ENCODE measurements at regions of chr15 and their contacts with region 1.

Region 1: GRCh38 chr15:25811481-25811906 is 51.6 kb downstream of the ATP10A start:
- DNase-seq: peak in 5 of 9 donors; percentile 20 to 47 (median 27)
- ATAC-seq: peak; percentile 50
- H3K4me3 ChIP-seq: peak overlapping the region; percentile 37
- H3K4me3 Mint-ChIP-seq: peak overlapping the region; percentile 74 to 95 (median 84)
- H3K27ac ChIP-seq: peak overlapping the region; percentile 64
- H3K27ac Mint-ChIP-seq: peak overlapping the region; percentile 80 to 98 (median 94)
- H3K4me1 ChIP-seq: peaks cover 20 to 51% of the 10 kb centered on the region in 2 donors
- H3K4me1 Mint-ChIP-seq: peaks cover 45 to 98% (median 81%) of the 10 kb centered on the region in 7 donors
- H3K27me3 ChIP-seq: no peaks in the 10 kb centered on the region
- H3K27me3 Mint-ChIP-seq: no peaks in the 10 kb centered on the region

Region 2: DNA sequence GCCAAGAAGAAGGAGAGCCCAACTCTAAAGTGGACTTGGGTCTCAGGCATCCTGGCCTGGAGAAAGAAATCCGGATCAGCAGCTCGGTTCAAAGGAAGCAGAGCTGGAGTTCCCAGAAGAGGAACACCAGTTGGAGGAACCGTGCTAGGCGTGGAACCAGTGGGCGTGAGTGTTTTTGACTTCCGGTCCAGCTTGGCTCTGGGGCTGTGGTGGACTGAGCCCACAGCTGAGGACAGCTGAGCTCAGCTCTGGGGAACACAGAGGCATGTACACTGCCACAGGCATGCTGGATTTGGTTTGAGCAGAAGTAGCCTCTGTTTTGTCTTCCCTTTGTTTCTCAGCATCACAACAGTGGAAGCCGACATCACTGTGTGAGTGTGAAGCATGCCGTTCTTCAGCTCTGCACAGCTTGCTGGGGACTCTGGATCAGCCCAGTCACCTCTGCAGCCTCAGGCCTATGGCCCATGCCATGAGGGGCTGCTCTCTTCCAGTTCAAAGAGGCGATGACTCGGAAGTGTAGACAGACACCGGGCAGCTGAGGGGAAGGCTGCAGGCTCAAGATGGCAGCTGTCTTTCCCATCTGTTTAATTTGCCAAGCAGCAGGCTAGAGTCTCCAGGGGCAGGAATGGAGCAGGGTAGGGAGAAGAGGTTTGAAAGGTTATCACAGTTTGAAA is 186.9 kb before region 1 on chr15:
- CTCF ChIA-PET with region 1: no interaction called
- POLR2A ChIA-PET with region 1: no interaction called
- intact Hi-C with region 1: no loop called
- DNase-seq: no peak
- ATAC-seq: no peak
- H3K4me3 ChIP-seq: no peak overlapping the region
- H3K4me3 Mint-ChIP-seq: no peak overlapping the region
- H3K27ac ChIP-seq: no peak overlapping the region
- H3K27ac Mint-ChIP-seq: no peak overlapping the region
- H3K4me1 ChIP-seq: no peaks in the 10 kb centered on the region
- H3K4me1 Mint-ChIP-seq: no peaks in the 10 kb centered on the region
- H3K27me3 ChIP-seq: no peaks in the 10 kb centered on the region
- H3K27me3 Mint-ChIP-seq: peaks cover 4 to 22% (median 9%) of the 10 kb centered on the region in 5 donors

Region 3: DNA sequence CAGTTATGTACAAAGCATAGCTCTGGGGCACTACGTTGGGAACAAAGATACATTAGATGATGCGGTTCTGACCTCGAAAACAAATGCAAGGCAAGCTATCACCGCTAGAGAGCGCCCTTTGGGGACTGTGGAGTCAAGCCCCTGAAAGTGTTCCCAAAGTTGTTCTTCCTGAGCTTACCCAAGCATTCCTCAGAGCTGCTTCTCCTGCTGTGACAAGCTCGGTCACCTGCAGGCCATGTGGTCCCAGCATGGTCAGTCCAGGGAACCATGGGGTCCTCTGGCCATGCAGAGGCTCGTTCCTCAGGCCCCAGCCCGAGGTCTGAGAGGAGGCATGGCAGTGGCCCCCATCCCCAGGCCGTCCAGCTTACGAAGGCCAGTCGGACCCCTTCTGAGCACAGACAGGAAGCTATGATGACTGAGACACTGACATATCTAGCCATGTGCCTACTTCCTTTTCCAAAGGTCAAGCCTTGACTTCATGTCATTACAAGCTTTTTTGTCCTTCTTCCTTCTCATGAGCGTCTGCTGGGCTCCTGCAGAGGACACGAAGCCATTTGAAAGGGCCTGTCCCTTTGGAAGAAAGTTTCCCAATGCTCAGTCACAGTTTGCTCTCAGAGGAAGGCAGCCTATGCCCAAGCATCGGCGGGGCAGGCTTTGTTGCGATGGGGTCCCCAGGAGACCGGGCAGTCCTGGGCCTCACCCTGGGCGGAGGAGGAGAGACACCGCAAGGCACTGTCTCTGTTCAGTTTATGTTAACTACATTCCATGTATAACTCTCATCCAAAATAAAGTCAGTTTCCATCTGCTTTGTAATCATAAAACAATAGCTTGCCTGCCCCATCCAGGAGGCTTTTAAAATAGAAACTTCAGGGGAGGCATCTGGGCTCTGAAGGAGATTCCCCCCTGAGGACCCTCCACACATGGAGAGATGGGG is 27.6 kb before region 1 on chr15:
- CTCF ChIA-PET with region 1: interaction called, 4 read pairs
- POLR2A ChIA-PET with region 1: interaction called, 3 read pairs
- intact Hi-C with region 1: loop called in 1 of 2 experiments (anchors 1 kb)
- DNase-seq: peak in 6 of 9 donors; percentile 22 to 50 (median 40)
- ATAC-seq: peak; percentile 52
- H3K4me3 ChIP-seq: no peak overlapping the region
- H3K4me3 Mint-ChIP-seq: peak overlapping the region in 1 of 10 donors; percentile 16
- H3K27ac ChIP-seq: no peak overlapping the region
- H3K27ac Mint-ChIP-seq: peak overlapping the region; percentile 1 to 88 (median 62)
- H3K4me1 ChIP-seq: peaks cover 0 to 5% of the 10 kb centered on the region in 2 donors
- H3K4me1 Mint-ChIP-seq: peaks cover 37 to 62% (median 45%) of the 10 kb centered on the region in 7 donors
- H3K27me3 ChIP-seq: no peaks in the 10 kb centered on the region
- H3K27me3 Mint-ChIP-seq: no peaks in the 10 kb centered on the region

Region 4: DNA sequence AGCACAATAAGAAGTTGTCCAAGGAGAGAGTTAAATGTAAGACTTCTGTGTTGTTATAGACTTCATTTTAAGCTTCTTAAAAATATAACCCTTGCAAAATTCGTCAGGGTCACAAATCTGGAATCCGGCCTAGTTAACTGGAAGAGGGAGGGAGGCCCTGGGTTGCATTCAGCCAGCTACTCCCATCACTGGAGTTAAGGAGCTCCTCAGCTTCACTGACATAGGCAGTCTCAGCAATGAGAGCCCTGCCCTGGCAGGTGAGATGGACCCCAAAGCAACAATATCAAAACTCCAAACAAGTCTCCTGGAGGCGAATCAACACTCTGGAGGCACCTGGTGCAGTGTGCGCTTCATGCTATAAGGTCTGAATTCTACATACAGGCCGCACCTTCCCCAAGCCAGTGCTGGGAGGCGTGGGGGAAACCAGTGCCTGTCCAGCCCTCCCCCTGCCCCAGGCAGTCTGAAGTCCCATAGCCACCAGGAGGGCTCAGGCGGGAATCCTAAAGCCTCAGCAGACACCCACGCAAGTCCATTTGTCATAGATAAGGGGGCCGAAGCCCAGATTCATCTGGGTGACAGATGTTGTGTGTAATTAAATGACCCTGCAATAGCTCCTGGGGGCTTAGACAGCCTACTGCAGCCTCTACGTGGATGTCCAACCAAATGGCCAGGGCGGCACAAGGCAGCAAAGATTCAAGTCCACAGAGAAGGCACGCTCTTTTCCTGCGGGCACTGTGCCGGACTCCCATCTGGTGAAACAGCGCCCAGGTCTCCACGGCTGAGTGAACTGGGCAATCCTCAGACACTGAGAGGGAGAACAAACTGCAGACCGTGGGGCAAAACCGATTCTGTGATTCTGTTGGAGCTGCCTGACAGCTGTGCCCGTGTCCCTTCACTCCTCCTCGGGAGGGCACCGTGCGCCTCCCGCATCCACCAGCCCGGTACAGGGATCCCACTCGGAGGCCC is 13.3 kb before region 1 on chr15:
- CTCF ChIA-PET with region 1: no interaction called
- POLR2A ChIA-PET with region 1: interaction called, 11 read pairs
- intact Hi-C with region 1: loop called in 1 of 2 experiments (anchors 2 kb)
- DNase-seq: no peak
- ATAC-seq: no peak
- H3K4me3 ChIP-seq: no peak overlapping the region
- H3K4me3 Mint-ChIP-seq: peak overlapping the region in 5 of 10 donors; percentile 21 to 89 (median 80)
- H3K27ac ChIP-seq: no peak overlapping the region
- H3K27ac Mint-ChIP-seq: peak overlapping the region in 8 of 9 donors; percentile 8 to 87 (median 65)
- H3K4me1 ChIP-seq: peaks cover 0 to 31% of the 10 kb centered on the region in 2 donors
- H3K4me1 Mint-ChIP-seq: peaks cover 57 to 96% (median 84%) of the 10 kb centered on the region in 7 donors
- H3K27me3 ChIP-seq: no peaks in the 10 kb centered on the region
- H3K27me3 Mint-ChIP-seq: no peaks in the 10 kb centered on the region

Region 5: DNA sequence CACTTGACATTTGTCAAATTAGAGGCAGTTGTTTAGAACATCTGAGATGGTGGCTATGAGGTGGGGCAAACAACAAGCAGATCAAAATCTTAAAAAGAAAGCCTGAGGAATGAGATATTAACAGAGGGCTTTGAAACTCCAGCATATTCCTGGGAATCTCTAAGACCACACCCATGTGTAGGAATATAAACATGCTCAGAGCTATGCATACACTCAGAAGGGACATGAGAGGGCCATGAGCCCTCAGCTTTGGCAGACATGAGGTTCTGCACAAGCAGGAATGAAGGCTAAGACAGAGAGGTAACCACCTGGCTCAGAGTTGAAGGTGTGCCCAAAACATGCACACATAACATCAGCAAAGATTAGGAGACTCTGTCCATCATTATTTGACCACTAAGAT is 13.7 kb after region 1 on chr15:
- CTCF ChIA-PET with region 1: no interaction called
- POLR2A ChIA-PET with region 1: interaction called, 6 read pairs
- intact Hi-C with region 1: loop called in 1 of 2 experiments (anchors 1 kb)
- DNase-seq: no peak
- ATAC-seq: no peak
- H3K4me3 ChIP-seq: no peak overlapping the region
- H3K4me3 Mint-ChIP-seq: peak overlapping the region in 2 of 10 donors; percentile 25 to 43
- H3K27ac ChIP-seq: no peak overlapping the region
- H3K27ac Mint-ChIP-seq: peak overlapping the region in 4 of 9 donors; percentile 16 to 72 (median 50)
- H3K4me1 ChIP-seq: peaks cover 0 to 19% of the 10 kb centered on the region in 2 donors
- H3K4me1 Mint-ChIP-seq: peaks cover 27 to 88% (median 83%) of the 10 kb centered on the region in 7 donors
- H3K27me3 ChIP-seq: no peaks in the 10 kb centered on the region
- H3K27me3 Mint-ChIP-seq: no peaks in the 10 kb centered on the region

Region 6: GRCh38 chr15:25830844-25831451 is 19.5 kb after region 1 on chr15:
- CTCF ChIA-PET with region 1: no interaction called
- POLR2A ChIA-PET with region 1: interaction called, 6 read pairs
- intact Hi-C with region 1: loop called in 1 of 2 experiments (anchors 2 kb)
- DNase-seq: no peak
- ATAC-seq: no peak
- H3K4me3 ChIP-seq: no peak overlapping the region
- H3K4me3 Mint-ChIP-seq: no peak overlapping the region
- H3K27ac ChIP-seq: no peak overlapping the region
- H3K27ac Mint-ChIP-seq: peak overlapping the region in 4 of 9 donors; percentile 38 to 67 (median 64)
- H3K4me1 ChIP-seq: peaks cover 0 to 8% of the 10 kb centered on the region in 2 donors
- H3K4me1 Mint-ChIP-seq: peaks cover 18 to 76% (median 61%) of the 10 kb centered on the region in 7 donors
- H3K27me3 ChIP-seq: no peaks in the 10 kb centered on the region
- H3K27me3 Mint-ChIP-seq: no peaks in the 10 kb centered on the region

Region 7: GRCh38 chr15:25838191-25838870 is 26.8 kb after region 1 on chr15:
- CTCF ChIA-PET with region 1: no interaction called
- POLR2A ChIA-PET with region 1: no interaction called
- intact Hi-C with region 1: loop called in 1 of 2 experiments (anchors 2 kb)
- DNase-seq: no peak
- ATAC-seq: no peak
- H3K4me3 ChIP-seq: no peak overlapping the region
- H3K4me3 Mint-ChIP-seq: peak overlapping the region in 8 of 10 donors; percentile 8 to 75 (median 40)
- H3K27ac ChIP-seq: no peak overlapping the region
- H3K27ac Mint-ChIP-seq: peak overlapping the region in 4 of 9 donors; percentile 48 to 74 (median 62)
- H3K4me1 ChIP-seq: peaks cover 0 to 14% of the 10 kb centered on the region in 2 donors
- H3K4me1 Mint-ChIP-seq: peaks cover 30 to 90% (median 75%) of the 10 kb centered on the region in 7 donors
- H3K27me3 ChIP-seq: no peaks in the 10 kb centered on the region
- H3K27me3 Mint-ChIP-seq: no peaks in the 10 kb centered on the region

Region 8: DNA sequence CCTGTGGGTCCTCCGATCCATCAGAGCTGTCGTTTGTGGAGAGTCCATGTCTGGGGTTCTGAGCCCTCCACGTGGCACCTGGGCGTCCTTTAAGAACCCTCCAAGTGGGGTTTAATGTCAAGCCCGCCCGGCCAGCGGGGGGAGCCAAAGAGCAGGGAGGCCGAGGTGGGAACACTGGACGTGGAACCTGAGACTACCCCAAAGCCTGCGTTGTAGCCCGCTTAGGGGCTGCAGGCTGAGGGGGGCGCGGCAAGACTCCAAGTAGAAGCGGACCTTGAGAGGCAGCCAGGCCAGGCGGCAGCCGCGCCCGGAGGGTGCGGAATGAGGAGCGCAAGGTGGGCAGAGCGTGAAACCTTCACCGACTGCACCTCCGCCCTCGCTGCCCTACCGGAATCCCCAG is 177.8 kb after region 1 on chr15:
- CTCF ChIA-PET with region 1: no interaction called
- POLR2A ChIA-PET with region 1: no interaction called
- intact Hi-C with region 1: no loop called
- DNase-seq: no peak
- ATAC-seq: no peak
- H3K4me3 ChIP-seq: no peak overlapping the region
- H3K4me3 Mint-ChIP-seq: no peak overlapping the region
- H3K27ac ChIP-seq: no peak overlapping the region
- H3K27ac Mint-ChIP-seq: no peak overlapping the region
- H3K4me1 ChIP-seq: no peaks in the 10 kb centered on the region
- H3K4me1 Mint-ChIP-seq: no peaks in the 10 kb centered on the region
- H3K27me3 ChIP-seq: no peaks in the 10 kb centered on the region
- H3K27me3 Mint-ChIP-seq: peaks cover 2 to 17% (median 7%) of the 10 kb centered on the region in 5 donors

Region 9: DNA sequence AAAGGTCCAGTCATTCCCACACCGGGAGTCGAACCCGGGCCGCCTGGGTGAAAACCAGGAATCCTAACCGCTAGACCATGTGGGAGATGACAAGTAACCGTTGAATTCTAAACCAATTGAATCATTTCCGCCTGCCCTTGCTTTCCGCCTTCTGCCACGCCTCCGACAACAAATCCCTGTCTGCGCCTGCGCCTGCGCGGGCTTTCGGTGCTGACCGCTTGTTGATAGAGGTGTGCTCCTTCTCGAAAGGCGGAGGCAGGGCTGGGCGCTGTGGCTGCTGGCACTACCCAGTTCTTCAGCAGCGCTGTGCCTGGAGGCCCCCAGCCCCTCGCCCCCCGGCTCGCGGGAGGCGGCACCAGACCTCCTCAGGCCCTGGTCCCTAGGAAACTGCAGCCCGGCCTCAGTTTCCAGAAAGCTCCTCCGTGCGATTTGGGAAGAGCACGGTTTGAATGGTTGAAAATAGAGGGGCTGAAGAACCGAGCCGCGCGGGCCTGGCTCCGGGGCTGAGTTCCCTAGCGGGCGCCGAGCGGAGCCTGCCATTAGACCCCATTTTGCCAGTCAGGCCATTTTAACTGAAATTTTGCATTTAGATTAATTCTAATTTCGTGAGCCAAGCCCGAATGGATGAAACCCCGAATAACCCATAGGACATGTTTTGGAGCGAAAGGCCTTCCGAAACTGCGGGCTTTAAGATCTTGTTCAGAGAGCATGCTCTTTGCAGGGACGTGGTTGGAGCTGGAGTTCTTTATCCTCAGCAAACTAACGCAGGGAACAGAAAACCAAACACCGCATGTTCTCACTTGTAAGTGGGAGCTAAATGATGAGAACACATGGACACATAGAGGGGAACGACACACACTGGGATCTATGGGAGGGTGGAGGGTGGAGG is 271.0 kb after region 1 on chr15:
- CTCF ChIA-PET with region 1: no interaction called
- POLR2A ChIA-PET with region 1: no interaction called
- intact Hi-C with region 1: loop called in 1 of 2 experiments (anchors 5 kb)
- DNase-seq: peak; percentile 90 to 97 (median 96)
- ATAC-seq: peak; percentile 97
- H3K4me3 ChIP-seq: peak overlapping the region; percentile 83
- H3K4me3 Mint-ChIP-seq: peak overlapping the region; percentile 84 to 97 (median 92)
- H3K27ac ChIP-seq: peak overlapping the region; percentile 78
- H3K27ac Mint-ChIP-seq: peak overlapping the region; percentile 86 to 100 (median 98)
- H3K4me1 ChIP-seq: peaks cover 0 to 3% of the 10 kb centered on the region in 2 donors
- H3K4me1 Mint-ChIP-seq: peaks cover 13 to 58% (median 43%) of the 10 kb centered on the region in 7 donors
- H3K27me3 ChIP-seq: no peaks in the 10 kb centered on the region
- H3K27me3 Mint-ChIP-seq: peaks cover 0 to 18% (median 0%) of the 10 kb centered on the region in 5 donors

Region 10: GRCh38 chr15:26115229-26115943 is 303.9 kb after region 1 on chr15:
- CTCF ChIA-PET with region 1: no interaction called
- POLR2A ChIA-PET with region 1: no interaction called
- intact Hi-C with region 1: no loop called
- DNase-seq: no peak
- ATAC-seq: no peak
- H3K4me3 ChIP-seq: no peak overlapping the region
- H3K4me3 Mint-ChIP-seq: no peak overlapping the region
- H3K27ac ChIP-seq: no peak overlapping the region
- H3K27ac Mint-ChIP-seq: no peak overlapping the region
- H3K4me1 ChIP-seq: no peaks in the 10 kb centered on the region
- H3K4me1 Mint-ChIP-seq: no peaks in the 10 kb centered on the region
- H3K27me3 ChIP-seq: no peaks in the 10 kb centered on the region
- H3K27me3 Mint-ChIP-seq: no peaks in the 10 kb centered on the region

Measured in naive thymus-derived CD4-positive, alpha-beta T cell (primary cell).